Transverse colon (tissue), 4 donors: ENCODE measurements at regions of chr10 and their contacts with region 1.

Region 1: DNA sequence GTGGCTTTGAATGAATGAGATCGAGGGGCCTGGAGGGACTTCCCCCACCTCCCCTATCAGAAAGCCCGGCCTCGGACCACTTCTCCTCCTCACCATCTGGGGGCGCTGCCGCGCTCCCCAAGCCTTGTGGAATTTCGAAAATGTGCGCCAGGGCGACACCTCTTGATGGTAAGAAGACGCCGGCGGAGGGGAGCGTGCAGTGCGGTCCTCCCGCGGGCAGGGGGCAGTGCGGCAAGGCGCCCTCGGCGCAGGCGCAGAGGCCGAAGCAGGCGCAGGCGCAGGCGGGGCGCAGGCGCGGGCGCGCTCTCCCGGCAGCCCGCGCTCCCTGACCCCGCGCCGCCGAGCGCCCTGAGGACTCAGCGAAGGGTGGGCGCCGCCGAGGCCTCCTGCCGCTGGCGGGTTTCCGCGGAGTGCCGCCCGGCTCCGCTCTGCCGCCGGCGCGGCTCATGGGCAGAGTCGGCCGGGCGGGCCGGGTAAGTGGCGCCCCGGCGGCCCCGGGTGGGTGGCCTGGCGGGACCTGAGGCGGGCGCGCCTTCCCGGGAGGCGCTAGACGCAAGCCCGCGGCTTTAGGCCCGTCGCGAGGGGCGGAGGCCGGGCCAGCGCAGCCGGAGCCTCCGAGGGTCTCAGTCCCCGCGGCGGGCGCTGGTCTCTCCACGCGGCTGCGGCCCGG is at the start of gene RBM17:
- DNase-seq: peak; percentile 96
- H3K4me3 ChIP-seq: peak within 1 kb of the TSS; percentile 80 to 100 (median 96)
- H3K27ac ChIP-seq: peak within 1 kb of the TSS; percentile 82 to 94 (median 94)
- H3K4me1 ChIP-seq: peaks cover 0 to 51% (median 25%) of the 10 kb centered on the region in 4 donors
- H3K27me3 ChIP-seq: no peaks in the 10 kb centered on the region
- CTCF ChIP-seq: peak; percentile 99 to 100 (median 100)
- EP300 ChIP-seq: no peak
- POLR2A ChIP-seq: no peak
- total RNA-seq, gene RBM17: 45.0 to 80.7 (median 64.7) TPM

Region 2: GRCh38 chr10:6014241-6014761 is 74.6 kb before region 1 on chr10:
- in situ Hi-C with region 1: loop called in 2 of 4 experiments (anchors 10 kb)
- intact Hi-C with region 1: no loop called
- DNase-seq: peak; percentile 68
- H3K4me3 ChIP-seq: no peak overlapping the region
- H3K27ac ChIP-seq: no peak overlapping the region
- H3K4me1 ChIP-seq: peaks cover 0 to 13% (median 7%) of the 10 kb centered on the region in 4 donors
- H3K27me3 ChIP-seq: no peaks in the 10 kb centered on the region
- CTCF ChIP-seq: peak; percentile 65 to 75 (median 73)
- EP300 ChIP-seq: no peak
- POLR2A ChIP-seq: no peak